Left lung (tissue), 14 donors: ENCODE measurements at regions of chr16 and their contacts with region 1.

Region 1: DNA sequence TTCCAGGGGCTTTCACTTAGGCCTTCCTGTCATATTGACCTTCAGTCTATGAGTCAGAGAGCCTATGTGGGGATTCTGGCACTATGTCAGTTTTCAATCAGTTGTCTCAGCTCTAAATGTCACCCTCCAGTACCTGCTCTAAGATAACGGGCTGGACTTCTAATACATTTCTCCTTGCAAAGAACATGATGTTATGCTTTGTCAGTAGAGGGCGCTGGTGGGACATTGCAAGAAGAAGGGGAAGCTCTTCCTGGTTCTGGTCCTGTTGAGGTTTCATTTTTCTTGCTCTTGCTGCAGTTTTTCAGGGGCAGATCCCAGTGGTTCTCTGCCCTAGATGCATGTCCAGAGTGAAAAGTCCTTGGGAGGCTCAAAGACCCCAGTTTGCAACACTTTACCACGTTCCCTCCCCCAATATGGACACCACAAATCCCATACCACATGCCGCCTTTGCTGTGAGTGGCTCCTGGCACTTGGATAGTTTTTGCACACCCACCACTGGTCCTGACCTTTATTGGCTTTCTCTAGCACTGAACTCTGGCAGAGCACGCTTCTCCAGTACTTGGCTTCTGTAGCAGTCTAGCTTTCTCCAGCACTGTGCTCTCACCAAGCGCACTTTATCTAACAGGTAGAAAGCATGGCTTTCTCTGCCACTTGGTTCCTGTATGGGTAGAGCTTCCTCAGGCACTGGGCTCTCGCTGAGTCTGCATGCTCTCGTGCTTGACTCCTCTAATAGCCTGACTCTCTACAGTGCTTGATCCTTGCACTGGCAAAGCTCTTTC is 49.0 kb downstream of the BCL7C start:
- DNase-seq: peak in 3 of 4 donors; percentile 60 to 85 (median 77)
- ATAC-seq: peak; percentile 94
- H3K4me3 ChIP-seq: peak overlapping the region; percentile 4 to 27
- H3K27ac ChIP-seq: peak overlapping the region; percentile 50 to 67
- H3K4me1 ChIP-seq: peaks cover 4 to 13% of the 10 kb centered on the region in 2 donors
- H3K27me3 ChIP-seq: no peaks in the 10 kb centered on the region
- CTCF ChIP-seq: peak; percentile 84

Region 2: GRCh38 chr16:30902029-30902972 is 57.4 kb after region 1 on chr16:
- intact Hi-C with region 1: loop called in 1 of 2 experiments (anchors 5 kb)
- DNase-seq: peak; percentile 73 to 96 (median 76)
- ATAC-seq: peak; percentile 93
- H3K4me3 ChIP-seq: peak overlapping the region; percentile 28 to 52
- H3K27ac ChIP-seq: peak overlapping the region; percentile 93 to 97
- H3K4me1 ChIP-seq: peaks cover 19 to 38% of the 10 kb centered on the region in 2 donors
- H3K27me3 ChIP-seq: no peaks in the 10 kb centered on the region
- CTCF ChIP-seq: peak; percentile 12 to 40

Region 3: DNA sequence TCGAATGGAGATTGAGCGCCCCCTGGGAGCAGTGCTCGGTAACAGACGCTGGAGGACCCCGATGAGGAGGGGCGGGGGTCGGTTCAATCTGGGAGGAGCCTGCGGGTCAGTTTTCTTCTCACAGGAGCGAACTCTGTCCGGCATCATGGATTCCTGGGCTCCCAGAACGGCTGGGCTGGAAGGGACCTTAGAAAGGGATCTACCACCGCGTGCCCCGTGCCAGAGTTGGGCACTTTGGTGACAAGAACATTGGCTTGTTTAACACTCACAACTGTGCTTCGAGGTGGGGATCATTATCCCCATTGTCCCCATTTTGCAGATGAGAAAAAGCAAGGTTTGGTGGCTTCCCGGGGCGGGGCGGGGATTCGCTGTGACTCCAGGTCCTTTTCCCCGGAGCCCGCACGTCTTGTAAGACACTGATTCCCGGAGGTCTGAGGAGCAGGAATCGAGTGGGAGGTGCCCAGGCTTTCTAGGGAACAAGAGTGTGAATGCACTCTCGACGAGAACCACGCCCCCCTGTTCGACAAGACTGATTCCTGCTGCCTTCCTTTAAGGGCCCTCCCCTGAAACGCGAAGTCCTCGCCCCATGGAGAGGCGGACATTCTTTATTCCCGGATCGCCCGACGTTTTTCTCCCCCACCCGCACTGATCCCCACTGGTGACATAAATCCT is 77.0 kb after region 1 on chr16:
- intact Hi-C with region 1: loop called in 1 of 2 experiments (anchors 2 kb)
- DNase-seq: peak; percentile 91 to 96 (median 92)
- ATAC-seq: peak; percentile 47
- H3K4me3 ChIP-seq: peak overlapping the region; percentile 33 to 73
- H3K27ac ChIP-seq: peak overlapping the region; percentile 98
- H3K4me1 ChIP-seq: peaks cover 2 to 21% of the 10 kb centered on the region in 2 donors
- H3K27me3 ChIP-seq: no peaks in the 10 kb centered on the region
- CTCF ChIP-seq: peak; percentile 88 to 92